ENCODE measurements at regions of chr3 and their contacts with region 1.

Region 1: DNA sequence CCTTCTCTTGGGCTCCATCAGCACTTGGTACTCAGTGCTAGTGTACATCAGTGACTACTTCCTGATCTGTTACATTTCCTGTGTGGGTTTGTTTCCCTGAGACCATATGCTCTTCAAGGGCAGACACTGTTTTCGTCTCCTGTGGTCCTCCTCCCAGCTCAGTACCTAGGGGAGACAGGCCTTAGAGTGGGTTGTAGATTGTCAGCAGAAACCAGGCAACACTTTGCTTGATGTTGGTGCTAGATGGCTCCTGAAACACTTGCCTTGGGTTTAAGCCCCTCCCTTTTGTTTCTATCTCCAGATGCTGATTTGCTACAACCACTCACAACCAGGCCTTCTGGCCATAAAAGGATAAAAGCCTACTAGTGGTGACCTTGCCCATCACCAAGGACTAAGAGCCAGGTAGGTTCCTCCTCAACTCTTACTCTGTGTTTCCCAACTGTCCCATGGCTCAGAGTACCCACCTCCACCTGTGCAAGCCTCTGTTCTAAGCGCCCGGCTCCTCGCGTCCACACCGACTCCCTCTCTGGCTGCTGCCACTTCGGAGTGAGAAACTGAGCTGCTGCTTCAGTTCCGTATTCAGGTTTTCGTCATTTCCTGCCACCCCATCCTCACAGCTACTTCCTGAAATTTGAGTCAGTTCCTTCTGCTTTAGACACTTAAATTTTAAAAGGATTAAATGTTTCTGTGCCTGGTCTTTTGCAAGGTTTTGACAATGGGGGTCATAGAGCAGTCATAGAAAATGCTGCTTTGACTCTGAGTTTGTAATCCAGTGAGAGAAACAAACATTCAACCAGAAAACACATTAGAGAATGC is at the start of gene HCLS1:
- DNase-seq: peak; percentile 73
- ATAC-seq: peak; percentile 85
- H3K4me3 Mint-ChIP-seq: peak within 1 kb of the TSS; percentile 90
- H3K27ac Mint-ChIP-seq: peak within 1 kb of the TSS; percentile 96
- H3K4me1 Mint-ChIP-seq: peaks cover 55% of the 10 kb centered on the region
- H3K27me3 Mint-ChIP-seq: no peaks in the 10 kb centered on the region
- CTCF ChIP-seq: no peak
- total RNA-seq, gene HCLS1: 434 and 440 TPM in 2 replicates

Region 2: DNA sequence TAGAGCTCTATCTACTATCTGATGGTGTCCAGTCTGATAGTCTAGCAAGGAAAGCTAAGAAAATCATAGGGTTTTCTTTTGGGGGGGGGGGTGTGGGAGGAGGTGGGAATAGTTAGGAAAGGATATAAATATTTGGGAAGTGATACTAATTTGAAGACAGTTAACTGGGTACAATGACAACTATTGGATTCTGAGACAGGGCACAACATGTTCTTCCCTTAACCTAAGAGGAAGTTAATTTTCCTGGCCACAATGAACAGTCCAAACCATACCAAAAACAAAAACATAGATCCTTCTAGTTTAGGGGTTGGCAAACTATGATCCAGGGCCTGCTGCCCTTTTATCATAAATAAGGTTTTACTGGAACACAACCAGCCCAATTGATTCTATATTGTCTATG is 10.1 kb after region 1 on chr3:
- CTCF ChIA-PET with region 1: no interaction called
- POLR2A ChIA-PET with region 1: interaction called, 15 read pairs
- intact Hi-C with region 1: no loop called
- DNase-seq: no peak
- ATAC-seq: no peak
- H3K4me3 Mint-ChIP-seq: no peak overlapping the region
- H3K27ac Mint-ChIP-seq: no peak overlapping the region
- H3K4me1 Mint-ChIP-seq: no peaks in the 10 kb centered on the region
- H3K27me3 Mint-ChIP-seq: no peaks in the 10 kb centered on the region
- CTCF ChIP-seq: no peak

Region 3: GRCh38 chr3:122383771-122384697 is 723.5 kb after region 1 on chr3 and contains the start of gene FAM162A:
- CTCF ChIA-PET with region 1: no interaction called
- POLR2A ChIA-PET with region 1: interaction called, 22 read pairs
- intact Hi-C with region 1: loop called (anchors 1 kb)
- DNase-seq: peak; percentile 93
- ATAC-seq: peak; percentile 94
- H3K4me3 Mint-ChIP-seq: peak within 1 kb of the TSS; percentile 94
- H3K27ac Mint-ChIP-seq: peak within 1 kb of the TSS; percentile 91
- H3K4me1 Mint-ChIP-seq: peaks cover 38% of the 10 kb centered on the region
- H3K27me3 Mint-ChIP-seq: no peaks in the 10 kb centered on the region
- CTCF ChIP-seq: no peak
- total RNA-seq, gene FAM162A: 28.5 and 33.9 TPM in 2 replicates